ENCODE measurements at regions of chr9 and their contacts with region 1.

Region 1: DNA sequence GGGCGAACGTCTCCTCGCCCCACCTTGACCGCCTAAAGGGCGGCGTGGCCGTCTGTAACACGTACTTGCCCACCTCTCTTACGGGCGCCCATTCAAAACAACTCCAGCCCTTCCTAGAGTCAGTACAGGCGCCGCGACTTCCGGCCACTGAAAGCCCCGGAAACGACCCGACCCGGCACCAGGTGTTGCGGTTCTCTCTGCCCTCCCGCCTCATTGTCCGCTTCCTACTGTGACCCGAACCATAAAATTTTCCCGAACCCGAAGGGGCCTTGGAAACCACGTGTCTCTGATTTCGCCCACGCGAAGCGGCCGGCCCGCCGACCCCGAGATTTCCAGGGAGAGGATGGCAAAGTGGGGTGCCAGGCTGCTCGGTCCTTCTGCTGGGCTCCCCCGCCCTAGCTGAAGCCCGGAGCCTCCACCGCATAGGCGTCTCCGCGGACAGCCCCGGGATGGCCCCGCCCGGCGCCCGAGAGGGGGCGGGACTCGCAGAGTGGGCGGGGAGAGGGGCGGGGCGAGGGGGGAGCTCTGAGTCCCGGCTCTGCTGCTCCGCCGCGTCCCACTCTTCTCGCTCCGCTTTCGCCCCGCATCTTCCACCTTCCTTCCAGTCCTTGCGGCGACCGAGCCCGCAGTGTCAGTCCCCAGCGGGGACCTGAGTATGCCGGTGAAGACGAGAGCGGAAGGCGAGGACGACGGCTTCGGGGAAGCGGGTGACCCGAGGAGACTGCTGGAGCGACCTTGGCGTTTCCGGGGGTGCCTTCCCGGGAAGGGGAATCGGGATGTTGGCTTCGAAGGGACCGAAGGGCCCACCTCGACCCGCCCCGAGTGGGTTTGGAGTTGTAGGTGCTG is 684 bp upstream of the PTGES2 start:
- DNase-seq: peak; percentile 96
- H3K4me3 Mint-ChIP-seq: peak overlapping the region; percentile 99
- H3K27ac Mint-ChIP-seq: peak overlapping the region; percentile 99
- H3K4me1 Mint-ChIP-seq: peaks cover 32% of the 10 kb centered on the region
- H3K27me3 Mint-ChIP-seq: peaks cover 10% of the 10 kb centered on the region

Region 2: GRCh38 chr9:128067876-128068613 is 60.2 kb before region 1 on chr9 and contains the start of gene SLC25A25:
- intact Hi-C with region 1: loop called (anchors 1 kb)
- DNase-seq: peak; percentile 100
- H3K4me3 Mint-ChIP-seq: peak within 1 kb of the TSS; percentile 93
- H3K27ac Mint-ChIP-seq: peak within 1 kb of the TSS; percentile 84
- H3K4me1 Mint-ChIP-seq: peaks cover 43% of the 10 kb centered on the region
- H3K27me3 Mint-ChIP-seq: no peaks in the 10 kb centered on the region
- total RNA-seq, gene SLC25A25: 12.2 and 14.0 TPM in 2 replicates

Region 3: GRCh38 chr9:128117613-128118471 is 10.4 kb before region 1 on chr9:
- intact Hi-C with region 1: loop called (anchors 1 kb)
- DNase-seq: peak; percentile 99
- H3K4me3 Mint-ChIP-seq: no peak overlapping the region
- H3K27ac Mint-ChIP-seq: peak overlapping the region; percentile 29
- H3K4me1 Mint-ChIP-seq: peaks cover 9% of the 10 kb centered on the region
- H3K27me3 Mint-ChIP-seq: no peaks in the 10 kb centered on the region

Region 4: GRCh38 chr9:128191406-128192046 is 63.3 kb after region 1 on chr9 and contains the start of gene CIZ1:
- intact Hi-C with region 1: loop called (anchors 5 kb)
- DNase-seq: peak; percentile 93
- H3K4me3 Mint-ChIP-seq: peak within 1 kb of the TSS; percentile 100
- H3K27ac Mint-ChIP-seq: peak within 1 kb of the TSS; percentile 92
- H3K4me1 Mint-ChIP-seq: peaks cover 29% of the 10 kb centered on the region
- H3K27me3 Mint-ChIP-seq: no peaks in the 10 kb centered on the region
- total RNA-seq, gene CIZ1: 142 and 143 TPM in 2 replicates

Region 5: GRCh38 chr9:128249908-128250838 is 122.0 kb after region 1 on chr9:
- intact Hi-C with region 1: loop called (anchors 1 kb)
- DNase-seq: peak; percentile 99
- H3K4me3 Mint-ChIP-seq: peak overlapping the region; percentile 85
- H3K27ac Mint-ChIP-seq: no peak overlapping the region
- H3K4me1 Mint-ChIP-seq: peaks cover 9% of the 10 kb centered on the region
- H3K27me3 Mint-ChIP-seq: peaks cover 32% of the 10 kb centered on the region

Region 6: DNA sequence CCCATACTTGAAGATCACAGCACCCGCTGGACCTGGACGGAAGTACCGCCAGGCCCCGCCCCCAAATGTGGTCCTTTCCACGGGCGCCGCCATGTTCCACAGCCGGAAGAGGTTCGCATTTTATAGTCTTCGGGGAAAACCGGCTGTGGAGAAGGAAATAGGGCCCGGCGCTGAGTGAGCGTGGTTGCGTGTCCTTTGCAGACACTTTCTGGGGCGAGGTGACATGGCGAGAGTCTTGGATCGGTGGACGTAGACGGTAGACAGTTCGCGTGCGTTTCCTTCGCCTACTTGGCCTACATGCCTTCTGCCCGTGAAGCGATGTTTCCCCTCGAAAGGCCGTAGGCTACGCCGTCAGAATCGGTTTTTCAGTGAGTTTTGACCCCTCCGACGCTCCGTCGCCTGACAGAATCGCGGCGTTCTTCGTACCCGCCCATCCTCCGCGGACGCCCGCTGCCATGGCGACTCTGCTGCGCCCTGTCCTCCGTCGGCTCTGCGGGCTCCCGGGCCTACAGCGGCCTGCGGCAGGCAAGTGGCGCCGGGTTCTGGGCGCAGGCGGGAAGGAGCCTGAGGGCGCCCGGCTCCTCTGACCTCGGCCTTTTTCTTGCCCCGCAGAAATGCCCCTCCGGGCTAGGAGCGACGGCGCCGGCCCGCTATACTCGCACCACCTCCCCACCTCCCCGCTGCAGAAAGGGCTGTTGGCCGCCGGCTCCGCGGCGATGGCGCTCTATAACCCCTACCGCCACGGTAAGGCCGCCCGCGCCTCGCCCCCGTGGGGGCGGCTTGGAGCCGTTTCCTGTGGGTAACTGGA is 194.4 kb after region 1 on chr9 and contains the starts of genes COQ4 and TRUB2:
- intact Hi-C with region 1: loop called (anchors 1 kb)
- DNase-seq: peak; percentile 98
- H3K4me3 Mint-ChIP-seq: peak within 1 kb of the TSS; percentile 91
- H3K27ac Mint-ChIP-seq: peak within 1 kb of the TSS; percentile 97
- H3K4me1 Mint-ChIP-seq: peaks cover 9% of the 10 kb centered on the region
- H3K27me3 Mint-ChIP-seq: no peaks in the 10 kb centered on the region
- total RNA-seq, gene COQ4: 60.7 and 61.4 TPM in 2 replicates
- total RNA-seq, gene TRUB2: 40.4 and 43.0 TPM in 2 replicates